Calu3 (cell line): ENCODE measurements at regions of chr5 and their contacts with region 1.

Region 1: GRCh38 chr5:163564321-163564938 is 59.0 kb downstream of the MAT2B start:
- DNase-seq: peak; percentile 71
- H3K4me3 Mint-ChIP-seq: no peak overlapping the region
- H3K27ac Mint-ChIP-seq: no peak overlapping the region
- H3K4me1 Mint-ChIP-seq: no peaks in the 10 kb centered on the region
- H3K27me3 Mint-ChIP-seq: peaks cover 79% of the 10 kb centered on the region
- CTCF ChIP-seq: peak; percentile 76

Region 2: DNA sequence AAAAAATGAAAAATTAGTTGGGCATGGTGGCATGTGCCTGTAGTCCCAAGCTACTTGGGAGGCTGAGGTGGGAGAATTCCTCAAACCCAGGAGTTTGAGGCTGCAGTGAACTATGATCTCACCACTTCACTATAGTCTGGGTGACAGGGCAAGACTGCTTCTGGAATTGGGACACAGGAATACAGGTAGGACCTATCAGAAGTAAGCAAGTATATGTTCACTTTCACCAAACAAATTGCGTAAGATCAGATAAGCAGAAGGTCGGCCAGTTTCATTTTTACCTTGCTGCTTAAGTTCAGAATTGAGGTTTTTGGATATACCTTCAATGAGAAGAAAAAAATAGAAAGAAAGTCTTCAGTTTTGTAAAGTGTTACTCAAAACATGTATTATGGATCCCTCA is 112.7 kb after region 1 on chr5:
- CTCF ChIA-PET with region 1: no interaction called
- intact Hi-C with region 1: no loop called
- DNase-seq: no peak
- H3K4me3 Mint-ChIP-seq: no peak overlapping the region
- H3K27ac Mint-ChIP-seq: no peak overlapping the region
- H3K4me1 Mint-ChIP-seq: no peaks in the 10 kb centered on the region
- H3K27me3 Mint-ChIP-seq: no peaks in the 10 kb centered on the region
- CTCF ChIP-seq: no peak

Region 3: GRCh38 chr5:164013077-164013670 is 448.7 kb after region 1 on chr5:
- CTCF ChIA-PET with region 1: interaction called, 7 read pairs
- intact Hi-C with region 1: loop called (anchors 2 kb)
- DNase-seq: peak; percentile 75
- H3K4me3 Mint-ChIP-seq: no peak overlapping the region
- H3K27ac Mint-ChIP-seq: no peak overlapping the region
- H3K4me1 Mint-ChIP-seq: peaks cover 12% of the 10 kb centered on the region
- H3K27me3 Mint-ChIP-seq: no peaks in the 10 kb centered on the region
- CTCF ChIP-seq: peak; percentile 77

Region 4: GRCh38 chr5:164475339-164475977 is 911.0 kb after region 1 on chr5:
- CTCF ChIA-PET with region 1: no interaction called
- intact Hi-C with region 1: loop called (anchors 1 kb)
- DNase-seq: peak; percentile 34
- H3K4me3 Mint-ChIP-seq: no peak overlapping the region
- H3K27ac Mint-ChIP-seq: no peak overlapping the region
- H3K4me1 Mint-ChIP-seq: no peaks in the 10 kb centered on the region
- H3K27me3 Mint-ChIP-seq: no peaks in the 10 kb centered on the region
- CTCF ChIP-seq: peak; percentile 58

Region 5: GRCh38 chr5:164672931-164673694 is 1108.7 kb after region 1 on chr5:
- CTCF ChIA-PET with region 1: no interaction called
- intact Hi-C with region 1: loop called (anchors 5 kb)
- DNase-seq: no peak
- H3K4me3 Mint-ChIP-seq: no peak overlapping the region
- H3K27ac Mint-ChIP-seq: no peak overlapping the region
- H3K4me1 Mint-ChIP-seq: no peaks in the 10 kb centered on the region
- H3K27me3 Mint-ChIP-seq: no peaks in the 10 kb centered on the region
- CTCF ChIP-seq: no peak